ENCODE measurements at regions of chr6 and their contacts with region 1.

Region 1: GRCh38 chr6:167826230-167826895 is 348 bp upstream of the AFDN start:
- DNase-seq: peak; percentile 91
- H3K4me3 Mint-ChIP-seq: peak overlapping the region; percentile 89
- H3K27ac Mint-ChIP-seq: peak overlapping the region; percentile 76
- H3K4me1 Mint-ChIP-seq: peaks cover 31% of the 10 kb centered on the region
- H3K27me3 Mint-ChIP-seq: peaks cover 70% of the 10 kb centered on the region

Region 2: GRCh38 chr6:167706313-167707109 is 119.9 kb before region 1 on chr6:
- intact Hi-C with region 1: loop called (anchors 2 kb)
- DNase-seq: peak; percentile 94
- H3K4me3 Mint-ChIP-seq: peak overlapping the region; percentile 69
- H3K27ac Mint-ChIP-seq: peak overlapping the region; percentile 96
- H3K4me1 Mint-ChIP-seq: peaks cover 38% of the 10 kb centered on the region
- H3K27me3 Mint-ChIP-seq: peaks cover 63% of the 10 kb centered on the region

Region 3: GRCh38 chr6:167845856-167846255 is 19.5 kb after region 1 on chr6:
- intact Hi-C with region 1: no loop called
- DNase-seq: no peak
- H3K4me3 Mint-ChIP-seq: no peak overlapping the region
- H3K27ac Mint-ChIP-seq: no peak overlapping the region
- H3K4me1 Mint-ChIP-seq: peaks cover 2% of the 10 kb centered on the region
- H3K27me3 Mint-ChIP-seq: peaks cover 35% of the 10 kb centered on the region

Region 4: GRCh38 chr6:167855825-167856425 is 29.6 kb after region 1 on chr6:
- intact Hi-C with region 1: loop called (anchors 2 kb)
- DNase-seq: no peak
- H3K4me3 Mint-ChIP-seq: no peak overlapping the region
- H3K27ac Mint-ChIP-seq: peak overlapping the region; percentile 1
- H3K4me1 Mint-ChIP-seq: peaks cover 16% of the 10 kb centered on the region
- H3K27me3 Mint-ChIP-seq: peaks cover 39% of the 10 kb centered on the region

Region 5: DNA sequence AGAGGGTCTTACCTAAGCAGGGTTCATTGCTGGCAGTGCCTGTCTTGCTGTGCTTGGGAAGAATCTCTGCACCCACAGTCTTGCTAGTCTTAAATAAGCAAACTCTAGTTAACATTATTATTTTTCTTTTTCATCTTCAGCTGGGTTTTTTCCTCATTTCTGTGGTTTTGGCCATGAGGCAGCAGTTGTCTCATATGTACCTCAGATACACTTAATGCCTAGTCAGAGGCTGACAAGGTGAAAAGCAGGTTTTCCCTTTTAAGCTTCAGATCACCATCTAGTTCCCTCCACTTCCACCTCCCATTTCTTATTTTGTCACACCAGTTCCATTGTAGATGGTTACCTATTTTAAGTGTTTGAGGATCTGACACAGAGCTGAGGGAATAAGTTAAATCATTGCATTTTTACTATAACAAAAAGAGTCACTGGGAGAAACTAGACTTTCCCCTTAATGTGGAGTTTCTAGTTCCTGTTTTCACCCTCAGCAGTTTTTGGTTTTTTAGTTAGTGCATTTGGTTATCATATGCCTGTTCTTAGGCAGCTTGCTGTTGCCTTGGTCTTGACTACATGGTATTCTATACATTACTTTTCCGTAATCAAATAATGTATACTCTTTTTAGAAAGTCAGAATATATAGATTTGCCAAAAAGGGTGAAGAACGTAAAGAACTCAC is 46.3 kb after region 1 on chr6:
- intact Hi-C with region 1: no loop called
- DNase-seq: no peak
- H3K4me3 Mint-ChIP-seq: no peak overlapping the region
- H3K27ac Mint-ChIP-seq: no peak overlapping the region
- H3K4me1 Mint-ChIP-seq: no peaks in the 10 kb centered on the region
- H3K27me3 Mint-ChIP-seq: peaks cover 3% of the 10 kb centered on the region

Region 6: GRCh38 chr6:168050881-168051586 is 224.7 kb after region 1 on chr6:
- intact Hi-C with region 1: no loop called
- DNase-seq: no peak
- H3K4me3 Mint-ChIP-seq: no peak overlapping the region
- H3K27ac Mint-ChIP-seq: no peak overlapping the region
- H3K4me1 Mint-ChIP-seq: no peaks in the 10 kb centered on the region
- H3K27me3 Mint-ChIP-seq: no peaks in the 10 kb centered on the region

Measured in activated CD4-positive, alpha-beta T cell treated with anti-CD3 and anti-CD28 coated beads, Interleukin-2, amount 10 ng/mL, durations not matched to agents 24 days and 14 days (primary cell).